Activated CD8-positive, alpha-beta T cell treated with anti-CD3 and anti-CD28 coated beads for 36 hours (primary cell): ENCODE measurements at regions of chr2 and their contacts with region 1.

Region 1: GRCh38 chr2:74529357-74530238 is at the starts of genes AUP1 and HTRA2:
- DNase-seq: peak; percentile 98
- ATAC-seq: peak; percentile 86
- H3K4me3 Mint-ChIP-seq: peak within 1 kb of the TSS; percentile 98
- H3K27ac Mint-ChIP-seq: peak within 1 kb of the TSS; percentile 93
- H3K4me1 Mint-ChIP-seq: peaks cover 40% of the 10 kb centered on the region
- H3K27me3 Mint-ChIP-seq: no peaks in the 10 kb centered on the region
- CTCF ChIP-seq: no peak
- total RNA-seq, gene AUP1: 90.8 to 92.7 TPM
- total RNA-seq, gene HTRA2: 42.0 to 45.0 TPM

Region 2: DNA sequence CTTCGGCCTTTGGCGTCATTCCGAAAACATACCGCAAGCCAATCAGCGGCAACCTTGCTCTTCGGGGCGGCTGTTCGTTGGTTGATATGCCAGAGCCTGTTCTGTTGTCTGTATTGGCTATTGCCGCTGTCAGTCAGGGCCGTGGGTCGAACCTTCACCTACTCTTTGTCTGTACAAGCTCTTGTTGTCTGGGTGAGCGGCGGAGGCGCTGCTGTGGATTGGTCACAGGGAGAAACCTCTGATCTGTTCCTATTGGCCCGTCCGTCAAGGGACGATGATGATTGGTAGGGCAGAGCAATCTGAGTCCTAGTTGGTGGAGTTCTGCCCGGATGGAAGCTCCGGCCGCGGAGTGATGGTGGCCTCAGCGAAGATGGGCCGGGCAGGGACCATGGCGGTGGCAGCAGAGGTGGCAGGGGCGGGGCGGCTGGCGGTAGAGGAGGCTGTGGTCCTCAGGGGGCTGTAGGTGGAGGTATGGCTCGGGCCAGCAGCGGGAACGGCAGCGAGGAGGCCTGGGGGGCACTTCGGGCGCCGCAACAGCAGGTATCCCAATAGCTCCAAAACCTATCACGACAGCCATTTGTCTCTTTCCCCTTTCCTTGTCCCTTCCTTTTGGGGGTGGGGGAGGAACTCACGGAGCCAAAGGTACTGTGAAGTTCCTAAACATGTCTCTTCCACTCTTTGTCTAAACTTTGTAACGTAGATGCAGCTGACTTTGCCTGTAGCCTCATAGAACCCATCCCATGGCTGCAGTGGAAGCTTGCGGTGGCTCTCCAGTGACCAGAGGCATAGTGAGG is 71.3 kb before region 1 on chr2 and contains the start of gene WBP1:
- CTCF ChIA-PET with region 1: interaction called, 30 read pairs
- POLR2A ChIA-PET with region 1: interaction called, 14 read pairs
- intact Hi-C with region 1: no loop called
- DNase-seq: peak; percentile 100
- ATAC-seq: peak; percentile 84
- H3K4me3 Mint-ChIP-seq: peak within 1 kb of the TSS; percentile 98
- H3K27ac Mint-ChIP-seq: peak within 1 kb of the TSS; percentile 99
- H3K4me1 Mint-ChIP-seq: peaks cover 42% of the 10 kb centered on the region
- H3K27me3 Mint-ChIP-seq: no peaks in the 10 kb centered on the region
- CTCF ChIP-seq: no peak
- total RNA-seq, gene WBP1: 20.3 to 23.0 TPM

Region 3: GRCh38 chr2:74472086-74472944 is 57.3 kb before region 1 on chr2 and contains the start of gene MRPL53:
- CTCF ChIA-PET with region 1: interaction called, 10 read pairs
- POLR2A ChIA-PET with region 1: interaction called, 3 read pairs
- intact Hi-C with region 1: no loop called
- DNase-seq: peak; percentile 96
- ATAC-seq: peak; percentile 92
- H3K4me3 Mint-ChIP-seq: peak within 1 kb of the TSS; percentile 95
- H3K27ac Mint-ChIP-seq: peak within 1 kb of the TSS; percentile 93
- H3K4me1 Mint-ChIP-seq: peaks cover 16% of the 10 kb centered on the region
- H3K27me3 Mint-ChIP-seq: no peaks in the 10 kb centered on the region
- CTCF ChIP-seq: no peak
- total RNA-seq, gene MRPL53: 111 to 113 TPM

Region 4: GRCh38 chr2:74482801-74483674 is 46.6 kb before region 1 on chr2 and contains the starts of genes CCDC142 and TTC31:
- CTCF ChIA-PET with region 1: interaction called, 33 read pairs
- POLR2A ChIA-PET with region 1: interaction called, 38 read pairs
- intact Hi-C with region 1: loop called (anchors 5 kb)
- DNase-seq: peak; percentile 98
- ATAC-seq: peak; percentile 93
- H3K4me3 Mint-ChIP-seq: peak within 1 kb of the TSS; percentile 86
- H3K27ac Mint-ChIP-seq: peak within 1 kb of the TSS; percentile 100
- H3K4me1 Mint-ChIP-seq: peaks cover 25% of the 10 kb centered on the region
- H3K27me3 Mint-ChIP-seq: no peaks in the 10 kb centered on the region
- CTCF ChIP-seq: peak; percentile 83
- total RNA-seq, gene CCDC142: 7.2 to 10.3 TPM
- total RNA-seq, gene TTC31: 20.3 to 21.9 TPM

Region 5: GRCh38 chr2:74507145-74507925 is 22.3 kb before region 1 on chr2 and contains the start of gene PCGF1:
- CTCF ChIA-PET with region 1: interaction called, 6 read pairs
- POLR2A ChIA-PET with region 1: interaction called, 21 read pairs
- intact Hi-C with region 1: no loop called
- DNase-seq: peak; percentile 100
- ATAC-seq: peak; percentile 91
- H3K4me3 Mint-ChIP-seq: peak within 1 kb of the TSS; percentile 94
- H3K27ac Mint-ChIP-seq: peak within 1 kb of the TSS; percentile 99
- H3K4me1 Mint-ChIP-seq: peaks cover 42% of the 10 kb centered on the region
- H3K27me3 Mint-ChIP-seq: peaks cover 44% of the 10 kb centered on the region
- CTCF ChIP-seq: peak; percentile 50
- total RNA-seq, gene PCGF1: 16.1 to 21.1 TPM

Region 6: DNA sequence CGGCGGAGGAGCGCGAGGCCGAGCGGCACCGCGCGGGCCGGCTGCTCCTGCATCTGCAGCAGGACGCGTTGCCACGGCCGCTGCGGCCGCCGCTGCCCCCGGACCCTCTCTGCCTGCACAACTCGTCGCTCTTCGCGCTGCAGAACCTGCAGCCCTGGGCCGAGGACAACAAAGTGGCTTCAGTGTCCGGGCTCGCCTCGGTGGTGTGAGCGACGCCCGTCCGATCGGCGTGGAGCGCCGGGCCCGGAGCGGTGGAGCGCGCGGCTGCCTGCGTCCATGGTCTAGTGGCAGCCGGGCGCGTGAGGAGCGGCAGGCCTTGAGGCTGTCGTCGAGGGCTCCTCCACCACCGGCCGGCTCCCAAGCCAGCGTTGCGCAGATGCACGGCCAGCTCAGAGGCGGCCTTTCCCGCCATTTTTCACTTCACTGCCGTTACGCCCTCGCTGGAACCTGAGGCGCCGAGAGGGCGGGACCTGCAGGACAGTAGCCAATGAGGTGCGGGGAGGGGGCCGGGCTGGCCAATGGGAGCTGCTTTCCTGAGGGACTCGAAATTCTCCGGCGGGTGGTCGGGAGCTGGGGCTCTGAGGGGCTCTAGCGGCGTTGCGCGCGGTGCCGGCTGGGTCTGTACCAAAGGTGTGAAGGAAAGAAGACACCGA is 13.5 kb before region 1 on chr2:
- CTCF ChIA-PET with region 1: interaction called, 5 read pairs
- POLR2A ChIA-PET with region 1: interaction called, 15 read pairs
- intact Hi-C with region 1: no loop called
- DNase-seq: peak; percentile 80
- ATAC-seq: peak; percentile 80
- H3K4me3 Mint-ChIP-seq: peak overlapping the region; percentile 42
- H3K27ac Mint-ChIP-seq: no peak overlapping the region
- H3K4me1 Mint-ChIP-seq: peaks cover 26% of the 10 kb centered on the region
- H3K27me3 Mint-ChIP-seq: peaks cover 66% of the 10 kb centered on the region
- CTCF ChIP-seq: no peak

Region 7: GRCh38 chr2:74544634-74545033 is 15.0 kb after region 1 on chr2:
- CTCF ChIA-PET with region 1: interaction called, 12 read pairs
- POLR2A ChIA-PET with region 1: interaction called, 5 read pairs
- intact Hi-C with region 1: no loop called
- DNase-seq: peak; percentile 47
- ATAC-seq: no peak
- H3K4me3 Mint-ChIP-seq: no peak overlapping the region
- H3K27ac Mint-ChIP-seq: no peak overlapping the region
- H3K4me1 Mint-ChIP-seq: no peaks in the 10 kb centered on the region
- H3K27me3 Mint-ChIP-seq: peaks cover 39% of the 10 kb centered on the region
- CTCF ChIP-seq: peak; percentile 44